ENCODE measurements at regions of chr12 and their contacts with region 1.

Region 1: DNA sequence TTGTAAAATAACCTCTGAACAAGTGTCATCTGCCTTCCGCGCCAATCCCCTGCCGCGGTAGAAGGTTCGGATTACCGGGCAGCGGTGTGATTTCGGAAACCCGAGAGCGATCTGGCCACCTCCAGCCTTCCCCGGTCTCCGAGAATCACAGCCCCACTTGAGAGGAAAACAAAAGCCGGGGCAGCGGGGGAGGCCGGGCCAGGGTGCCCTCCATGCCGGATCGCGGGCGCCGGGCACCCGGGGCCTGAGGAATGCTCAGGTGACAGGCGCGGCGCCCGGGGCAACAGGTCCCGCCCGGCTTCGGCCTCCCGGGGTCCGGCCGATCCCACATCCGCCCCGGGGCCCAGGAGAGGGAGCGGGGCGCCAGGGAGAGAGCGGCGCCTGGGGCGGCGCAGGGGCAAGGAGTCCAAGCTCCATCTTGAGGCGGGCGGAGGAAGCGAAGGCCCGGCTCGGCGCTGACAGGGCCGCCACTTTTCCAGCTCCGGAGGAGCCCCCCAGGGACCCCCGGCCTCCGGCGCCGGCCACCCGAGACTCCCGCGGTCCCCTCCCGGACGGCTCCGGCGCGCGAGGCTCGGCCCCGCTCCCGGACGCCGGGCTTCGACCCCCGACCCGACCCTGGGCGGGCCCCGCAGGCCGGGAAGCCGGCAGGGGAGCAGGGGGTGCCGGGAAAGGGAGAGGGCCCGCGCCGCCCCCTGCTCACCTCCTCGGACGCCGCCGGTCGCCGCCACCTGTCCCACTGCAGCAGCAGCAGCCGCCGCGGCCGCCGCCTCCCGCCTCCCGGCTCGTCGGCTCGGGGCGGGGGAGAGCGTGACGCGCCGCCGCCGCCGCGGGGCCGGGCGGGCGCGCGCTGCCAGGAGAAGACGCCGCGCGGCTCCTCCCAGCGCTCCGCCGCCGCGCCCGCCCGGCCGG is at the start of gene CLIP1:
- DNase-seq: peak; percentile 74
- ATAC-seq: peak; percentile 73
- H3K4me3 ChIP-seq: peak within 1 kb of the TSS; percentile 86
- H3K27ac ChIP-seq: peak within 1 kb of the TSS; percentile 86
- H3K4me1 ChIP-seq: peaks cover 40% of the 10 kb centered on the region
- H3K27me3 ChIP-seq: no peaks in the 10 kb centered on the region
- CTCF ChIP-seq: peak; percentile 55
- total RNA-seq, gene CLIP1: 46.4 and 57.9 TPM in 2 replicates

Region 2: GRCh38 chr12:122459211-122459610 is 37.1 kb after region 1 on chr12:
- CTCF ChIA-PET with region 1: no interaction called
- POLR2A ChIA-PET with region 1: no interaction called
- intact Hi-C with region 1: loop called (anchors 1 kb)
- DNase-seq: no peak
- ATAC-seq: no peak
- H3K4me3 ChIP-seq: no peak overlapping the region
- H3K27ac ChIP-seq: no peak overlapping the region
- H3K4me1 ChIP-seq: peaks cover 15% of the 10 kb centered on the region
- H3K27me3 ChIP-seq: no peaks in the 10 kb centered on the region
- CTCF ChIP-seq: no peak

Measured in PC-3 (cell line).